ENCODE measurements at regions of chr6 and their contacts with region 1.

Region 1: GRCh38 chr6:137094411-137095008 is 49.7 kb upstream of the IL20RA start:
- DNase-seq: peak; percentile 84
- ATAC-seq: peak; percentile 34
- H3K4me3 ChIP-seq: no peak overlapping the region
- H3K4me3 Mint-ChIP-seq: peak overlapping the region; percentile 64
- H3K27ac ChIP-seq: peak overlapping the region; percentile 37 to 81
- H3K27ac Mint-ChIP-seq: peak overlapping the region; percentile 93
- H3K4me1 ChIP-seq: peaks cover 59% of the 10 kb centered on the region in 2 donors
- H3K4me1 Mint-ChIP-seq: peaks cover 59% of the 10 kb centered on the region
- H3K27me3 ChIP-seq: no peaks in the 10 kb centered on the region
- H3K27me3 Mint-ChIP-seq: no peaks in the 10 kb centered on the region
- CTCF ChIP-seq: peak; percentile 90

Region 2: DNA sequence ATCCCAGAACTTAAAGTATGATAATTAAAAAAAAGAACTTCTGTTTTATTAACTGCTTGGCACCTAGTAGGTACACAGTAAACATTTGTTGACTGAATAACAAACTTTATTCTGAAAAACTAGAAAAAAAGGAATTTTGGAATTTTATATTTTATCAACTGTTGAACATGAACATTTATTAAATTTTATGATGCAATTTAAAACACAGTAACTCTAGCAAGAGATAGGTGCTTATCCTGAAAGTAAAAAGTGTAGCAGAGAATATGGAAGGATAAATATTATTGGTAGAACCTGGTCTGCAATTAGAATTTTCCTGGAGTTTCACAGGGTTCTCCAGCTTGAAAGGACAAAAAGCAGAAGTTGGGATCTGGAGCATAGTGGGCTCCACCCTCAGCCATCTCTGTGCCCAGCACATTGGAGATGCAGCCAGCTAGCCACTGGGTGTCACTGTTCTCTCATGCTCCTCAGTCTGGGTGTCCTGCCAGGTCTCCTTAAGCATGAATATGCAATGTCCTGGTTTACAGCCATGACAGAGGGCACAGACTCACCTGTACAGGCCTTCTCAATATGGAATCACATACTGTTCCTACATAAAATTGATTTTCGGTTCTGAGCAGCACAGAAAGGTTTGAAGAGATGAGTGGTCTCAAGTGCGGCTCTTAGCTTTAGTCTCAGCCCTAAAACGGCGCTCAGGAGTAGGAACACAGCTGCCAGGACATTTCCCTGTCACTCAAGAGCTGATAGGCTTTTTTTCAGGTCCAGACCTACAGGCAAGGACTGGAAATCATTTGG is 18.0 kb before region 1 on chr6:
- CTCF ChIA-PET with region 1: interaction called, 55 read pairs
- POLR2A ChIA-PET with region 1: no interaction called
- intact Hi-C with region 1: loop called (anchors 2 kb)
- DNase-seq: peak; percentile 81
- ATAC-seq: peak; percentile 99
- H3K4me3 ChIP-seq: no peak overlapping the region
- H3K4me3 Mint-ChIP-seq: no peak overlapping the region
- H3K27ac ChIP-seq: no peak overlapping the region
- H3K27ac Mint-ChIP-seq: no peak overlapping the region
- H3K4me1 ChIP-seq: no peaks in the 10 kb centered on the region
- H3K4me1 Mint-ChIP-seq: peaks cover 3% of the 10 kb centered on the region
- H3K27me3 ChIP-seq: no peaks in the 10 kb centered on the region
- H3K27me3 Mint-ChIP-seq: peaks cover 5% of the 10 kb centered on the region
- CTCF ChIP-seq: peak; percentile 82

Region 3: DNA sequence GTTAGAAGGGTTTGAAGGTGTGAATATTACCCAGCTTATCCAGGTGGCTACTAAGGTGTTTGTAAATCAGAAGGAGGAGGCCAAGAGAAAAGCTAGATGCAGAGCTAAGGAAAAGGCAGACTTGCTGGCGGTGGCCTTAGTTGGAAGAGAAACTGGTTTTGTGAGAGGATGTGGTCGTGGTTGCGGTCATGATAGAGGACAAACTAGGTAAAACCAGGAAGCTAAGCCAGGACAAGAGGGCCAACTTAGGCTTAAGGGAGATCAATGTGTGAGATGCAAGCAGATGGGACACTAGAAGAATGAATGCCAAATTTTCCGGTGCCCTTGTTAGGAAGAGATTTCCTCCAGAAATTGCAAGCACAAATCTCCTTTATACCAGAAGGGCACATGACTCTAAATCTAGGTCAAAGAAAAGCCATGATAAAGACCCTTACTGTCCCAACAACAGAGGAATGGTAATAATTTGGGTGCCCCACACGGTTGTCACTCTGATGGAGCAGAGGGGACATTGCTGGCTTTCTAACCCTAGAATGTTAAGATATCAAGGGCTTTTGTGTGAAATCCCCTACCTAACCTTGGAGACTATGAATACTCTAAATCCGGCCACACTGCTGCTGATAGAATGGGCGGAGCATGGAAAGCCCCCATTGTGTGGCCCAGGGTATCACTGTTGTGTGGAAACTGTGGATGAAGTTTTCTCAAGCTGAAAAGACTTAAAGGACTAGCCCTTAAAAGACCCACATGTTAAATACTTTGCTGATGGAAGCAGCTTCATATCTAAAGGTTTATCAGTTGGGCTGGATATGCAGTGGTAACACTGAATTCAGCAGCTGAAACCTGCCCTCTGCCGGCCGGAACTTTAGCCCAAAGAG is 71.1 kb after region 1 on chr6:
- CTCF ChIA-PET with region 1: interaction called, 265 read pairs
- POLR2A ChIA-PET with region 1: interaction called, 4 read pairs
- intact Hi-C with region 1: loop called (anchors 1 kb)
- DNase-seq: peak; percentile 56
- ATAC-seq: peak; percentile 67
- H3K4me3 ChIP-seq: peak overlapping the region in 1 of 5 experiments; percentile 28
- H3K4me3 Mint-ChIP-seq: peak overlapping the region; percentile 59
- H3K27ac ChIP-seq: peak overlapping the region in 1 of 2 donors; percentile 10
- H3K27ac Mint-ChIP-seq: peak overlapping the region; percentile 70
- H3K4me1 ChIP-seq: peaks cover 42 to 56% of the 10 kb centered on the region in 2 donors
- H3K4me1 Mint-ChIP-seq: peaks cover 63% of the 10 kb centered on the region
- H3K27me3 ChIP-seq: no peaks in the 10 kb centered on the region
- H3K27me3 Mint-ChIP-seq: no peaks in the 10 kb centered on the region
- CTCF ChIP-seq: no peak

Region 4: GRCh38 chr6:137213331-137213740 is 118.8 kb after region 1 on chr6:
- CTCF ChIA-PET with region 1: interaction called, 12 read pairs
- POLR2A ChIA-PET with region 1: no interaction called
- intact Hi-C with region 1: no loop called
- DNase-seq: no peak
- ATAC-seq: no peak
- H3K4me3 ChIP-seq: no peak overlapping the region
- H3K4me3 Mint-ChIP-seq: peak overlapping the region; percentile 18
- H3K27ac ChIP-seq: peak overlapping the region in 1 of 2 donors; percentile 45
- H3K27ac Mint-ChIP-seq: peak overlapping the region; percentile 73
- H3K4me1 ChIP-seq: peaks cover 52 to 60% of the 10 kb centered on the region in 2 donors
- H3K4me1 Mint-ChIP-seq: peaks cover 81% of the 10 kb centered on the region
- H3K27me3 ChIP-seq: no peaks in the 10 kb centered on the region
- H3K27me3 Mint-ChIP-seq: no peaks in the 10 kb centered on the region
- CTCF ChIP-seq: no peak

Region 5: DNA sequence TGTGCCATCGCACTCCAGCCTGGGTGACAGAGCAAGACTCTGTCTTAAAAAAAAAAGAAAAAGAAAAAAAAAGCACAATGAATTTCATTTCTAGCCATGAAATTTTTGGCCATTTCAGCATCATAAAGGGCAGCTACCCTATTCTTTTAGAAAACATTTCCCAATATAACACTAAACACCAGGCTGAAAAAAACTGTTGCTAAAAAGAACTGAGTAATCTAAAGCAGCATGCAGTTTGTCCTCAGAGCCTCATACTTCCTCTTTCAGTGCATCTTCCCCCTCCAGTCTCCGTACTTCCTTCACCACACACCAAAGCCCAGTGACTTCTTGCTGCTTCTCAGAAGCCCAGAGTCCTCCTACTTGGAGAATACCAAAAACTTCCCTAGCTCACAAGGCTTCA is 130.3 kb after region 1 on chr6:
- CTCF ChIA-PET with region 1: interaction called, 16 read pairs
- POLR2A ChIA-PET with region 1: interaction called, 13 read pairs
- intact Hi-C with region 1: no loop called
- DNase-seq: peak; percentile 80
- ATAC-seq: peak; percentile 79
- H3K4me3 ChIP-seq: peak overlapping the region in 1 of 5 experiments; percentile 8
- H3K4me3 Mint-ChIP-seq: peak overlapping the region; percentile 66
- H3K27ac ChIP-seq: peak overlapping the region; percentile 37 to 52
- H3K27ac Mint-ChIP-seq: peak overlapping the region; percentile 88
- H3K4me1 ChIP-seq: peaks cover 57 to 65% of the 10 kb centered on the region in 2 donors
- H3K4me1 Mint-ChIP-seq: peaks cover 70% of the 10 kb centered on the region
- H3K27me3 ChIP-seq: no peaks in the 10 kb centered on the region
- H3K27me3 Mint-ChIP-seq: no peaks in the 10 kb centered on the region
- CTCF ChIP-seq: no peak

Region 6: DNA sequence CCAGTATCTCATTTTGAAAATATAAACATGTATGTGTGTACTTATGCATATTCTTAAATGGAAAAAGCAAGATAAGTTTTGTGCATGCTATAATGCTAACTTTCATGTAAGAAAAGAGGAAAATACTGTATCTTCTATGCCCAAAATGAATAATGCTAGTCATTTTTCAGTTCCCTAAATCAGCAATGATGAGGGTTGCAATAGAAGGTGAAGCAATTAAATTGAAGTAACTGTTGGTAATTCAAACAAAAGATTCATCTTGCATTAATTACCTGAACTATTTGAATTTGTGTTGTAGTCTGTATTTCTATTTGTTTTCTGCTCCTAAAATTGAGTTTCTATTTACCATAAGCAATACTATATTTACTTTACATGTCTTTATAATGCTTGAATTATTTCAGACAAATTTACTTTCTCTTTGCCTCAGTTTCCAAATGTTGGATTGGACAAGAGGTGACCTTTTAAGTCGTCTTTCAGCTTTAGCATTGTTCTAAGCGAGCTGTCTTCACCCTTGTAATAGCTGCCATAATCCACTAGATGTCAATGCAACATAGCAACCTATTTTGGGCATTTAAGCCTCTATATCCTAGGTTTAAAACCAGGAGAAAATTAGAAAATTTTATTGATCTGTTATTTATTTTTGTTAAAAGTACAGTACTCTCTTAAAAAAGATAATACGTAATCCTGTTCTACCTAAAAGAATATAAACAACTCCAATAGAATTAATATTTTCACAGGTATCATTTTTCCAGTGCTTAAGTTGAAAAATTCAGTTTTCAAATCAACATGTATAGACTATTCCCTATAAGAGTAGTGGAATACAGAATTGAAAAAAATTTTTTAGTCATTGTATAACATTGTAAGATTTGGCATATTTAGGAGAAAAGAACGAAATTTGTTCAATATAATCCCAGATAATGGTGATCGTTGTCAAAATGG is 177.0 kb after region 1 on chr6:
- CTCF ChIA-PET with region 1: interaction called, 45 read pairs
- POLR2A ChIA-PET with region 1: no interaction called
- intact Hi-C with region 1: loop called (anchors 1 kb)
- DNase-seq: peak; percentile 63
- ATAC-seq: peak; percentile 72
- H3K4me3 ChIP-seq: no peak overlapping the region
- H3K4me3 Mint-ChIP-seq: no peak overlapping the region
- H3K27ac ChIP-seq: no peak overlapping the region
- H3K27ac Mint-ChIP-seq: no peak overlapping the region
- H3K4me1 ChIP-seq: peaks cover 5 to 14% of the 10 kb centered on the region in 2 donors
- H3K4me1 Mint-ChIP-seq: peaks cover 15% of the 10 kb centered on the region
- H3K27me3 ChIP-seq: no peaks in the 10 kb centered on the region
- H3K27me3 Mint-ChIP-seq: no peaks in the 10 kb centered on the region
- CTCF ChIP-seq: peak; percentile 93

Region 7: DNA sequence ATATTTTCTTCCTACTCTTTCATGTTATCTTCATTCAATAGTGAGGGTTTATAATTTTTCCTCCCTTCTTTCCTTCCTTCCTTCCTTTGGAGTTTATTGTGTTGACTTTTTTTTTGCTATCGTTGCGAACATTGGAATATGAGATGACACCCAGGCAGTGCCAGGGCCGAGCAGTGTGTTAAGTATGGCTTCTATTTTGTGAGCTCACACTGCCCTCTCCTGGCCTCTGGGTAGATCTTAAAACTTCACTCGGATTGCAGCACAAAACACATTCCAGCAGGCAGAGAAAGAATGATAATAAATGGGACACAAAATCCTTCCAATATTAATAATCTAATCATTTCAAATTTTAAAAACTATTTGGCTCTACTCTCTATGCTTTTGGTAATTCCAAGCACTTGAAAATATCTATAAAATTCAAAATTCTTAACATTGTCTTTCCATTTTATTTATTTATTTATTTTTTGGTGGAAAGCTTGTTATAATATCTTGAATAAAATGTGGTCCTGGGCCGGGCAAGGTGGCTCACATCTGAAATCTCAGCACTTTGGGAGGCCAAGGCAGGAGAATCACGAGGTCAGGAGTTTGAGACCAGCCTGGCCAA is 547.1 kb after region 1 on chr6:
- CTCF ChIA-PET with region 1: interaction called, 11 read pairs
- POLR2A ChIA-PET with region 1: no interaction called
- intact Hi-C with region 1: no loop called
- DNase-seq: peak; percentile 78
- ATAC-seq: peak; percentile 73
- H3K4me3 ChIP-seq: no peak overlapping the region
- H3K4me3 Mint-ChIP-seq: no peak overlapping the region
- H3K27ac ChIP-seq: no peak overlapping the region
- H3K27ac Mint-ChIP-seq: no peak overlapping the region
- H3K4me1 ChIP-seq: peaks cover 0 to 8% of the 10 kb centered on the region in 2 donors
- H3K4me1 Mint-ChIP-seq: peaks cover 13% of the 10 kb centered on the region
- H3K27me3 ChIP-seq: no peaks in the 10 kb centered on the region
- H3K27me3 Mint-ChIP-seq: peaks cover 9% of the 10 kb centered on the region
- CTCF ChIP-seq: peak; percentile 78